GM13977 (cell line): ENCODE measurements at regions of chr15 and their contacts with region 1.

Region 1: DNA sequence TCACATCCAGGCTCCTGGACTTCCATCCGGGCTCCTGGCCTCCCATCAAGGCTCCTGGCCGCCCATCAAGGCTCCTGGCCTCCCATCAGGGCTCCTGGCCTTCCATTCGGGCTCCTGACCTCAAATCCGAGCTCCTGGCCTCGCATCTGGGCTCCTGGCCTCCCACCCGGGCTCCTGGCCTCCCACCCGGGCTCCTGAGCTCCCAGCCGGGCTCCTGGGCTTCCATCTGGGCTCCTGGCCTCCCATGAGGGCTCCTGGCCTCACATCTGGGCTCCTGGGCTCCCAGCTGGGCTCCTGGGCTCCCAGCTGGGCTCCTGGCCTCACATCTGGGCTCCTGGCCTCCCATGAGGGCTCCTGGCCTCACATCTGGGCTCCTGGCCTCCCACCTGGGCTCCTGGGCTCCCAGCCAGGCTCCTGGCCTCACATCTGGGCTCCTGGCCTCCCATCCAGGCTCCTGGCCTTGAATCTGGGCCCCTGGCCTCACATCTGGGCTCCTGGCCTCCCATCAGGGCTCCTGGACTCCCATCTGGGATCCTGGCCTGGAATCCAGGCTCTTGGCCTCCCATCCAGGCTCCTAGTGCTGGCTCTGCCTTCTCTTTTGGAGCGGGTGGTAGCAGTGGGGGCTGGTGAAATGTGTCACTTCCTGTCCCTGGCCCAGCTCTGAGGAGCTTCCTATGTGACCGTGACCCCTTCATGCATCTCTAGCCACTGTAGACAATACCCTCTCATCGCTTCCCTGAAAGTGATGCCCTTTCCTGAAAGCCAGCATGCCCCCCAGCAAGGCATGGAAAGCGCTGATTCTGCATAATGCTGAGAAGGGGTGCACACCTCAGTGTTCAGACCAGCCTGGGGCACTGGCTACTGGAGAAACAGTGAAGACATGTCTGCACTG is 62.7 kb upstream of the BLM start:
- DNase-seq: no peak
- CTCF ChIP-seq: no peak

Region 2: DNA sequence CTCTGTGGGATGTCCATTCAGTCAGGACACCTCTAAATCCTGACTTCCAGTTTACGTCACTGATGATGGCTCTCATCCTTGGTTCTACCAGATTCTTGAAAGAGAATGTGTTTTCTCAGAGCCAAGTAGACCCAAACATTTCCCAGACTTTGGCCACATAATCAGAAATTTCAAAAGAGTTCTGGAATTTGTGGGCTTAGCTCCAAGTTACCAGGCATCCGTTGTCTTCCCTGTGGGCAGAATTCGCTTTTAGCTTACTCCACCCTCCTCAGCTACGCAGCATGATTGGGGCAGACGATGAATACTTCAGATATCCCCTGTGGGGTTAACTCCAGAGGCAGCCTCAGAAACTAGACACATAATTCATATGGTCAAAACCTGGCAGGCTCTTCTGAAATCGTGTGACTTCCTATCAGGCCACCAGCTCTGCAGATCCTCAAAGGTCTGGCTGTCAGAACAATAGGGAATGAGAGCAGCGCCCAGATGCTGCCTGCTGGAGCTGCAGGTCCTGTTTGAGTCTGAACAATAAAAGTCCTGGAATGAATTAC is 94.2 kb before region 1 on chr15:
- in situ Hi-C with region 1: no loop called
- DNase-seq: no peak
- CTCF ChIP-seq: no peak

Region 3: DNA sequence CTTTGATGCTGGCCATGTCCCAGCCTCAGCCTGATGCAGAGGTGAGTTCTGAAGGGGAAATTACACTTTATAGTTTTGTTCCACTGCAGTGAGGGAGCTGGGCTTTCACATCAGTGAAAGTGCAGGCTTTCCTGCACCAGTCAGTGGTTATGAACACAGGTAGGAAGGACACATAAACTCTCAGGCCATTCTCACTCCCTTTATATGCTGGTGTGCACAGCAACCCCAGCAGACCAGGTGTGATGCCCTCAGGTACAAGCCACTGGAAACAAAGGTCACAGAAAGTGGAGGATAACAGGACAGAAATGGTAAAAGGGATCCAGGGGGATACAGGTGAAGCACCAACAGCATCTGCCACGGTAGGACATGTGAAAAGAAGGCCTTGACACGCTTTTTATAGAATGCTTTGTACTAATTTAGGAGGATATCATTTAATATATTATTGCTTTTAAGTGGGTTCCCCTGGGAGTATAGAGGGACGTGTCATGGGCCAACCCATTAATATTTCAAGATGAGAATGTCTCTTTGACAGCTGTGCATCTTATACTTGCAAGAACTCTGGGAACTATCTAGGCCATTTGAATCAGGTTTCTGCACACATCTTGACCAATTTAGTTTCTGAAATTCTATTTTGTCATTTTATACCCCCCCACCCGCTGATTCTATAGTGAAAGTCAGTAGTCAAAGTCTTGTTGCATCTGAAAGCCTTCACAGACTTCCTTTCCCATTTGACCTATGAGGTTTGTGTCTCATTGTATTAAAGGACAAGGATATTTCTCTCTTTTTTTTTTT is 37.7 kb after region 1 on chr15:
- in situ Hi-C with region 1: loop called (anchors 5 kb)
- DNase-seq: peak; percentile 57
- CTCF ChIP-seq: no peak